ENCODE measurements at regions of chr6 and their contacts with region 1.

Region 1: DNA sequence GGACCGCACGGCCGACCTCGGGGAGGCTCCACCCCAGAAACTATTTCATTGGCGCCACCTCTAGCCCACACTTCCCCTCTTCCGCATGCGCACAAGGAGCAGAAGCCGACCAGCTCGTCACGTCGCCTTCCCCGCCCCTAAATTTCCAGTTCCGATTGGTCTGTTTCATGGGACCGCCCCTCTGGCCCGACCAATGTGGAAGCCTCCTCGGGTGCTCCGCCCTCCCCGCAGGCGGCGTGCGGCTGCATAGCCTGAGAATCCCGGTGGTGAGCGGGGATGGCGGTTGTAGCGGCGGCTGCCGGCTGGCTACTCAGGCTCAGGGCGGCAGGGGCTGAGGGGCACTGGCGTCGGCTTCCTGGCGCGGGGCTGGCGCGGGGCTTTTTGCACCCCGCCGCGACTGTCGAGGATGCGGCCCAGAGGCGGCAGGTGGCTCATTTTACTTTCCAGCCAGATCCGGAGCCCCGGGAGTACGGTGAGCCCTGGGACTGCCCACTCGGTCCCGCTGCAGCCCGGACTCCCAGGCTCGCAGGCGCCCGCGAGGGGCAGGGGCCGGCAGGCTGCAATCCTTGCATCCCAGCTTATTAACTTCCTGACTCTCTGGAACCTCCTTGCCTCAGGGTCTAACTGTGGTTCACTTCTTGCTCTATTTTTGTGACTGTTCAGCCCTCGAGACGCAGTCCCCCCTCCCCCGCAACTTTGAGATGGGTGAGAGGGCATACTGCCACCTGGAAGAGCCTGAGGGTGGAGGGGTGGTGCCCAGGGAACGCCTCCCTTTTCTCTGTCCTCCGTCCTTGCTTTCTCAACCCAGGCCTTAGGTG is at the start of gene BCKDHB:
- DNase-seq: peak; percentile 98
- H3K4me3 Mint-ChIP-seq: peak within 1 kb of the TSS; percentile 96
- H3K27ac Mint-ChIP-seq: peak within 1 kb of the TSS; percentile 90
- H3K4me1 Mint-ChIP-seq: peaks cover 20% of the 10 kb centered on the region
- H3K27me3 Mint-ChIP-seq: peaks cover 6% of the 10 kb centered on the region
- total RNA-seq, gene BCKDHB: 17.5 and 18.5 TPM in 2 replicates

Region 2: DNA sequence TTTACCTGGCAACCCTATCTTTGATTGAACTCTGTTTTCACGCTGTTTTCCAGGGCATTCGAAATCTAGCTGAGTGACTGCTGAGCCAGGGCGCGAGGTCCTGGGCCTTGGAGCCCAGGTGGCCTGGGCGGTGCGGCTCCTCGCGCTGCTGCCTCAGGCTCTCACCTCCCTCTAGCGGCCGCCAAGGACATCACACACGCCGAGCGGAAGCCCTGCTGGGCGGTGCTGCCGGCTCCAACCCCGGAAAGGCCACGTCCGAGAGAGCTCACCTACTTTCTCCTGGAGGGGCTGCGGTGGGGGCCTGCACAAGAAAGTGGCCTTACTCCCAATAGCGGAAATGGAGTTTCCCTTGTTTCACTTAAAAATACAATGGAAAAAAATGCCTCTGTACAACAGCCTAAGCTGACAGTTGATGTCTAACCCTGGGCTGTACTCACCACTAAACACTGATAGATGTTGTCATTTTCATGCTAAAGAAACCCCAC is 237.0 kb before region 1 on chr6:
- intact Hi-C with region 1: loop called (anchors 5 kb)
- DNase-seq: peak; percentile 74
- H3K4me3 Mint-ChIP-seq: no peak overlapping the region
- H3K27ac Mint-ChIP-seq: peak overlapping the region; percentile 29
- H3K4me1 Mint-ChIP-seq: peaks cover 10% of the 10 kb centered on the region
- H3K27me3 Mint-ChIP-seq: peaks cover 18% of the 10 kb centered on the region

Region 3: GRCh38 chr6:80029470-80029869 is 77.2 kb before region 1 on chr6:
- intact Hi-C with region 1: no loop called
- DNase-seq: no peak
- H3K4me3 Mint-ChIP-seq: no peak overlapping the region
- H3K27ac Mint-ChIP-seq: peak overlapping the region; percentile 62
- H3K4me1 Mint-ChIP-seq: peaks cover 14% of the 10 kb centered on the region
- H3K27me3 Mint-ChIP-seq: no peaks in the 10 kb centered on the region

Region 4: GRCh38 chr6:80163658-80164187 is 57.1 kb after region 1 on chr6:
- intact Hi-C with region 1: loop called (anchors 1 kb)
- DNase-seq: no peak
- H3K4me3 Mint-ChIP-seq: no peak overlapping the region
- H3K27ac Mint-ChIP-seq: no peak overlapping the region
- H3K4me1 Mint-ChIP-seq: peaks cover 7% of the 10 kb centered on the region
- H3K27me3 Mint-ChIP-seq: no peaks in the 10 kb centered on the region

Measured in activated T-helper 2 cell treated with anti-CD3 and anti-CD28 coated beads, Interferon-gamma antibody, Interleukin-2, Interleukin-4, amounts not matched to agents 10 μg/mL and 5 μg/mL and 100 μg/mL, durations not matched to agents 14 hours and 24 hours and 36 hours (primary cell).